WTC11 (cell line): ENCODE measurements at regions of chr1 and their contacts with region 1.

Region 1: GRCh38 chr1:110034451-110035235 is at the start of gene STRIP1:
- DNase-seq: peak; percentile 88
- ATAC-seq: peak; percentile 83
- H3K4me3 Mint-ChIP-seq: peak within 1 kb of the TSS; percentile 92
- H3K27ac Mint-ChIP-seq: peak within 1 kb of the TSS; percentile 95
- H3K4me1 Mint-ChIP-seq: peaks cover 33% of the 10 kb centered on the region
- H3K27me3 Mint-ChIP-seq: no peaks in the 10 kb centered on the region
- CTCF ChIP-seq: no peak
- total RNA-seq, gene STRIP1: 36.8 to 42.8 TPM (median 38.2 TPM) in 3 replicates

Region 2: GRCh38 chr1:110003747-110004630 is 30.7 kb before region 1 on chr1:
- CTCF ChIA-PET with region 1: interaction called, 20 read pairs
- POLR2A ChIA-PET with region 1: interaction called, 3 read pairs
- DNase-seq: peak; percentile 38
- ATAC-seq: peak; percentile 78
- H3K4me3 Mint-ChIP-seq: peak overlapping the region; percentile 43
- H3K27ac Mint-ChIP-seq: peak overlapping the region; percentile 91
- H3K4me1 Mint-ChIP-seq: peaks cover 61% of the 10 kb centered on the region
- H3K27me3 Mint-ChIP-seq: no peaks in the 10 kb centered on the region
- CTCF ChIP-seq: no peak

Region 3: DNA sequence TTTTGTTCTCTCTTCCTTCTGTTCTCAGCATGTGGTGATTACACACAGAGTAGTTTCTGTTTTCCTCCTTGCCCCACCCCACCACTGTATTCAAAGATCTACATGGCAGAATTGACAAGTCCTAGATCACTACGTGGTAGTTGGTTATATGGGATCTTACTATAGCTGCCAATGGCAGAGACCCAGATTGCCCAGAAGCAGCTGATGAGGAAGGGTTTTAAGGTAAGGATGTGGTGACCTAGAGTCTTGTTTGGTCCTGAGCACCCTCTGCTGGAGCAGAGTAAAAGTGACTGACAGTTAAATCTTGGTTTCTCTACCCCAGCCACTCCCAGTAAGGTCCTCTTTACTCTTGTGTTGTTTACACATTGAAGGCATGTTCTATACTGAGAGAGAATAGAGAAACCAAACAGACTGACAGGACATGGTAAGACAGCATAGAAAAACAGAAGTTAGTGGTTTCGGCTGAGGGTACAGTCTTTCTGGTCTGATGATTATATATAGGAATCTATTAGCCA is 23.1 kb before region 1 on chr1:
- CTCF ChIA-PET with region 1: interaction called, 20 read pairs
- POLR2A ChIA-PET with region 1: no interaction called
- DNase-seq: no peak
- ATAC-seq: peak; percentile 88
- H3K4me3 Mint-ChIP-seq: no peak overlapping the region
- H3K27ac Mint-ChIP-seq: 0 out of 2 replicates have a peak overlapping the region, but pooled peaks have one; percentile 50
- H3K4me1 Mint-ChIP-seq: peaks cover 11% of the 10 kb centered on the region
- H3K27me3 Mint-ChIP-seq: no peaks in the 10 kb centered on the region
- CTCF ChIP-seq: no peak

Region 4: GRCh38 chr1:110487726-110488125 is 453.1 kb after region 1 on chr1:
- CTCF ChIA-PET with region 1: no interaction called
- POLR2A ChIA-PET with region 1: no interaction called
- DNase-seq: no peak
- ATAC-seq: no peak
- H3K4me3 Mint-ChIP-seq: no peak overlapping the region
- H3K27ac Mint-ChIP-seq: no peak overlapping the region
- H3K4me1 Mint-ChIP-seq: peaks cover 10% of the 10 kb centered on the region
- H3K27me3 Mint-ChIP-seq: no peaks in the 10 kb centered on the region; the same call in 1 of the 2 replicates
- CTCF ChIP-seq: no peak